ENCODE measurements at regions of chr1 and their contacts with region 1.

Region 1: GRCh38 chr1:22471078-22471477 is 19.4 kb downstream of the ZBTB40 start:
- DNase-seq: no peak

Region 2: GRCh38 chr1:21631944-21632887 is 838.9 kb before region 1 on chr1:
- intact Hi-C with region 1: no loop called
- DNase-seq: no peak

Region 3: GRCh38 chr1:22903113-22903512 is 432.0 kb after region 1 on chr1:
- intact Hi-C with region 1: loop called in 1 of 2 experiments (anchors 2 kb)
- DNase-seq: no peak

Region 4: GRCh38 chr1:22916471-22916820 is 445.4 kb after region 1 on chr1:
- intact Hi-C with region 1: no loop called
- DNase-seq: peak; percentile 64